Activated CD8-positive, alpha-beta T cell treated with anti-CD3 and anti-CD28 coated beads for 36 hours (primary cell): ENCODE measurements at regions of chr9 and their contacts with region 1.

Region 1: GRCh38 chr9:72443855-72444254 is 77.6 kb upstream of the TMC1 start:
- DNase-seq: peak; percentile 45
- ATAC-seq: peak; percentile 86
- H3K4me3 Mint-ChIP-seq: no peak overlapping the region
- H3K27ac Mint-ChIP-seq: peak overlapping the region; percentile 92
- H3K4me1 Mint-ChIP-seq: peaks cover 29% of the 10 kb centered on the region
- H3K27me3 Mint-ChIP-seq: peaks cover 6% of the 10 kb centered on the region
- CTCF ChIP-seq: no peak

Region 2: GRCh38 chr9:72364679-72365524 is 79.0 kb before region 1 on chr9 and contains the start of gene ZFAND5:
- CTCF ChIA-PET with region 1: no interaction called
- POLR2A ChIA-PET with region 1: interaction called, 9 read pairs
- intact Hi-C with region 1: loop called (anchors 10 kb)
- DNase-seq: peak; percentile 97
- ATAC-seq: peak; percentile 85
- H3K4me3 Mint-ChIP-seq: peak within 1 kb of the TSS; percentile 97
- H3K27ac Mint-ChIP-seq: peak within 1 kb of the TSS; percentile 98
- H3K4me1 Mint-ChIP-seq: peaks cover 36% of the 10 kb centered on the region
- H3K27me3 Mint-ChIP-seq: no peaks in the 10 kb centered on the region
- CTCF ChIP-seq: no peak
- total RNA-seq, gene ZFAND5: 79.4 to 88.9 TPM

Region 3: DNA sequence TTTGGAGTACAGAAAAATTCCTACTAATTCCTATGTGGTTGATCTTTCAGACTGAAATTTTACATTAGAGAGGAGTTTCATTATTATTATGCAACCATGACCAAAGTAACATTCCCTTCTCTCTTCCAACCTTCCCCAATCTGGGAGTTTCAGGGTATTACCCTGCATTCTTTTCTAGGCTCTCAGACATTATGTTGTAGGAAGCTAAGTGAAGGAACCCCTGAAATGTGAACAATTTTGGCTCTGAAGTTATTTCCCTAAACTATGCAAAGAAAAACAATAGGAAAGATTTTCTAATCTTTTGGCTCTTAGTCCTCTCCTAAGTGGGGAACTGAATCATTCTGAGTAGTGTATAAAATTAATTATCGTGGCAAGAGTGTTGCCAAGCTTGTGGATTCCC is 15.5 kb before region 1 on chr9:
- CTCF ChIA-PET with region 1: no interaction called
- POLR2A ChIA-PET with region 1: no interaction called
- intact Hi-C with region 1: no loop called
- DNase-seq: no peak
- ATAC-seq: no peak
- H3K4me3 Mint-ChIP-seq: no peak overlapping the region
- H3K27ac Mint-ChIP-seq: no peak overlapping the region
- H3K4me1 Mint-ChIP-seq: no peaks in the 10 kb centered on the region
- H3K27me3 Mint-ChIP-seq: no peaks in the 10 kb centered on the region
- CTCF ChIP-seq: no peak

Region 4: DNA sequence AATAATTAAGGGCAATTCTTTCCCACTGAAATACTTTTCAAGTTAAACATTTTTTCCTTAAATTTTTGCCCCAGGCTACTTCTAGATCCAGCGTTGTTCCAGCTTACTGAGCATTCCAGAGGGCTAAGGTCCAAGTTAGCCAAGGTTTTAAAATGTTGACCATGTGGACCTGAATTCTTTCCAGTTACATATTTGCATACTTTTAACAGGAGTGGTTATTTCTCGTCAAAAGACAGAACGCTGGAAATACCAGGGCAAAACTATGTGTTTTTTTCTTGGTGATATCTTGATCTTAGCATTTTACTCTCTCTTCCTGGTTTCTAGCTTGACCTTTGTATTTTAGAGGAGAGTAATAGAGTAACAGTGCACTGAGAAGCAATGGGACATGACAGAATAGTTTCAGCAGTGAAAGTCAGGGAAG is 110.4 kb after region 1 on chr9:
- CTCF ChIA-PET with region 1: no interaction called
- POLR2A ChIA-PET with region 1: no interaction called
- intact Hi-C with region 1: no loop called
- DNase-seq: no peak
- ATAC-seq: no peak
- H3K4me3 Mint-ChIP-seq: no peak overlapping the region
- H3K27ac Mint-ChIP-seq: no peak overlapping the region
- H3K4me1 Mint-ChIP-seq: peaks cover 14% of the 10 kb centered on the region
- H3K27me3 Mint-ChIP-seq: no peaks in the 10 kb centered on the region
- CTCF ChIP-seq: no peak